ENCODE measurements at regions of chrX and their contacts with region 1.

Region 1: DNA sequence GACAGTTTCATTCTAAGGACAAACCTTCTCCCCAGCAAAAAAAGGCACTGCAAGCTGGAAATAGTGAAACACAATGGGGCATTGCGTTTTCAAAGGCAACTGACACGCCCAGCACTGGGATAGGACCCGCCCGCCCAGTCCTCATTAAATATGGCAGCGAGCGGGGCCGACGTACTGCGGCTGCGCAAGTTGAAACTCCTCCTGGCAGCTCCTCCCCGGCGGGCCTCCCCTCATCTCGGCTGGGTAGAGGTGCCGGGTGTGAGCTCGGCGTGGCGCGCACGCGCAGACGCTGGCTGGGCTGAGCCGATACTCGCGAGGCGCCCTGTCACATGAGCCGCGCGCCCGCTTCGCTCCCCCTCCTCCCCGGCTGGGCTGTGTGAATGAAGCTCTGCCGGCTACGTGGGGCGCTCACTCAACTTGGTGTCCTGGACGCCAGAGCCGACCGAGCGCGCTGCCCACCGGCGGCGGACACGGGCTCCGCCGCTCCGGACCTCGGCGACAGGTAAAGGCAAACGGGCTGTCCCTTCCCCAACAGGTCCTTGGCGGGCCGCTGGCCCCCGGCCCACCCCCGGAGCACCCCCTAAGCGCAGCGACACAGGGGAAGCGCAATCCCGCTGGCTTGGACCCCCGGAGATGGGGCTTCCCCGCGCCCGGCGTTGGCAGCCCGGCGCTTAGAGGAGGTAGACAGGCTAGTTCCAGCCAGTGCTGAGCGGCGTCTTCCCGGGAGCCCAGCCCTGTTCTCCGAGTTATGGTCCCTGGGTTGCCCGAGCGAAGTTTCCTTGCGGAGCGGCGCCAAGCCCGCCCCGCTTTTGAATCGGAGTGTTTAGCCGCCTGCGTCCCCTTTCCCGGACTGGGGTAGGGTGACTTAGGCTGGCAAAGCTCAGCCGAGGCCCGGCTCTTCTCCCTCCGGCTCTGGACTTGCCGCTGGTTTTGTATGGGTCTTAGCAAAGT is at the start of gene CLCN5:
- DNase-seq: peak; percentile 71
- ATAC-seq: peak; percentile 98
- H3K4me3 ChIP-seq: peak within 1 kb of the TSS; percentile 67
- H3K27ac ChIP-seq: peak within 1 kb of the TSS; percentile 14; the same call in 1 of the 2 replicates
- H3K4me1 ChIP-seq: no peaks in the 10 kb centered on the region
- H3K27me3 ChIP-seq: no peaks in the 10 kb centered on the region
- CTCF ChIP-seq: no peak
- EP300 ChIP-seq: no peak
- POLR2A ChIP-seq: peak; percentile 75
- RAD21 ChIP-seq: no peak
- polyA plus RNA-seq, gene CLCN5: 0.33 to 0.43 TPM

Region 2: GRCh38 chrX:49618574-49618973 is 304.0 kb before region 1 on chrX:
- CTCF ChIA-PET with region 1: no interaction called
- POLR2A ChIA-PET with region 1: no interaction called
- RAD21 ChIA-PET with region 1: no interaction called
- SMC1A ChIA-PET with region 1: no interaction called
- in situ Hi-C with region 1: no loop called
- intact Hi-C with region 1: no loop called
- DNase-seq: no peak
- ATAC-seq: no peak
- H3K4me3 ChIP-seq: no peak overlapping the region
- H3K27ac ChIP-seq: no peak overlapping the region
- H3K4me1 ChIP-seq: no peaks in the 10 kb centered on the region
- H3K27me3 ChIP-seq: no peaks in the 10 kb centered on the region
- CTCF ChIP-seq: no peak
- EP300 ChIP-seq: no peak
- POLR2A ChIP-seq: no peak
- RAD21 ChIP-seq: no peak

Region 3: DNA sequence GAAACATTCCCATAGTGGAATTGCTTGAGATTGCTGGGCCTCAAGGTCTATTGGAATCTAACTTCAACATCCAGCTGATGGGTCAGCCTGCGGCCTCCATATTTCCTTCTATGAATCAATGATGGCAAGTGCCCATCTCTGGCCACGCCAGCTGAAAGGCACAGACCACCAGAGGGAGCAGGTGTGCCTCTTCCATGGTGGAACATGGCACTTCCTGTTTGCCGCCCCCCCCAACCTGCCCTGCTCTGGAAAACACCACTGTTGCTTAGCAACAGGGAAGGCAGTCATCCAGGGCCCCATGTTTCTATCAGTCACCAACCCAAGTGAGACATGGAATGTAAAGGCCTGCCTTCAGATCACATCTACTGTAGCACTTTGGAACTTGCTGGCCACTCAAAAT is 81.9 kb before region 1 on chrX:
- CTCF ChIA-PET with region 1: interaction called, 14 read pairs
- POLR2A ChIA-PET with region 1: no interaction called
- RAD21 ChIA-PET with region 1: interaction called, 3 read pairs
- SMC1A ChIA-PET with region 1: interaction called, 3 read pairs
- in situ Hi-C with region 1: no loop called
- intact Hi-C with region 1: no loop called
- DNase-seq: peak; percentile 15
- ATAC-seq: peak; percentile 84
- H3K4me3 ChIP-seq: no peak overlapping the region
- H3K27ac ChIP-seq: no peak overlapping the region
- H3K4me1 ChIP-seq: no peaks in the 10 kb centered on the region
- H3K27me3 ChIP-seq: no peaks in the 10 kb centered on the region
- CTCF ChIP-seq: peak; percentile 41 to 66 (median 57); a peak in 4 of 6 replicates
- EP300 ChIP-seq: no peak
- POLR2A ChIP-seq: no peak
- RAD21 ChIP-seq: peak; percentile 45

Region 4: DNA sequence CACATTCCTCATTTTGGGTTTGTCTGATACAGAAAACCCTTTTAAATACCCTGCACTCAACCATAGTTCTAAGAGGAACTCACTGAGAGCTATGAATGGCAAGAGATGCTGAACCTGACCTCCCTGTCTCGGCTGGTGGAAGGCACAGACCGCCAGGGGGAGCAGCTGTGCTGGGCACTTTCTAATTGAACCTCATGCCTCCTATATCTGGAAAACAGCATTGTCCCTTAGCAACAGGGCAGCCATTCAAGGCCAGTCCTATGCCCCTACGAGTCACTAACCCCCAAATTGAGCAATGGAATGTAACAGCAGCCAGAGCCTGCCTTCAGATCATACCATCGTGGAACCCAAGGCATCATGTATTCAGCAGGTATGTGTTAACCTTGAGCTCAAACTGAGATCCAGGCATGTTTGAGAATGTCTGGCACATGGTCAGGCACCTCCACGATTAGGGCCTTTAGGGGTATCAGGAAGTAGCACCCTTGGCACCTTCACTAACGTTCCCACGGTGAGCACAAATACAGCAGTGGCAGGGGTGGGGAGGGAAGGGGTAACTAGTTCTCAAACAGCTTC is 38.2 kb before region 1 on chrX:
- CTCF ChIA-PET with region 1: interaction called, 72 read pairs
- POLR2A ChIA-PET with region 1: no interaction called
- RAD21 ChIA-PET with region 1: interaction called, 16 read pairs
- SMC1A ChIA-PET with region 1: interaction called, 22 read pairs
- in situ Hi-C with region 1: no loop called
- intact Hi-C with region 1: loop called (anchors 5 kb)
- DNase-seq: peak; percentile 7
- ATAC-seq: peak; percentile 80
- H3K4me3 ChIP-seq: no peak overlapping the region
- H3K27ac ChIP-seq: no peak overlapping the region
- H3K4me1 ChIP-seq: no peaks in the 10 kb centered on the region; the same call in 1 of the 2 replicates
- H3K27me3 ChIP-seq: no peaks in the 10 kb centered on the region
- CTCF ChIP-seq: peak; percentile 76 to 88 (median 83)
- EP300 ChIP-seq: no peak
- POLR2A ChIP-seq: no peak
- RAD21 ChIP-seq: peak; percentile 45; the same call in 1 of the 2 replicates

Region 5: DNA sequence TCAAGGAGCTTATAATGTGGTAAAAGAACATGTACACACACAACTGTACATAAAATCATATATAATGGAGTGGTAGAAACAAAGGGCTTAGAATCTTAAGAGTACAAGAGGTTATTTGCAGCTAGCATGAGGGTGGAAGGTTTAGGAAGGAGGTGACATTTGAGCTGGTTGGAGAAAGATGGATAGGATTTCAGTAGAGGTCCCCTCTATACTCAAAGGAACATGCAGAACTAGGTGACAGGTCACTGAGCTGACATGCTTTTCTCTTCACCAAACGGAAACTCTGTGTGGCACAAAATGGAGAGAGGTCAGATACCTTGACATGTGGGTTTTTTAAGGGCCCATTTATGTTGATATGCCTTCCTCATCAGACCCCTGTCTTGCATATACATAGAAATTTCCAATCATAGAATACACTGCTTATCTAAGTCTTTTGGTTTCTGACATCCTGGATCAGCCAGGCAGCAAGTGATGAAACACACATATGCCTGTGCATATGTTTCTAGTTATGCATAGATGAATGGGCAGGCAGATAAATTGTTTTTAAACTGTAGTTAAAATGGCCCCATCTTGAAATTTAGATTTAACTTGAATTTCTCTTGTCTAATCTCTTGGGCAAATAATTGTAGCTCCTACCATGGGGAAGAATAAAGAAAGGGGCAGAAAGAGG is 29.1 kb after region 1 on chrX:
- CTCF ChIA-PET with region 1: interaction called, 7 read pairs
- POLR2A ChIA-PET with region 1: no interaction called
- RAD21 ChIA-PET with region 1: interaction called, 3 read pairs
- SMC1A ChIA-PET with region 1: interaction called, 10 read pairs
- in situ Hi-C with region 1: no loop called
- intact Hi-C with region 1: no loop called
- DNase-seq: no peak
- ATAC-seq: no peak
- H3K4me3 ChIP-seq: no peak overlapping the region
- H3K27ac ChIP-seq: no peak overlapping the region
- H3K4me1 ChIP-seq: no peaks in the 10 kb centered on the region; the same call in 1 of the 2 replicates
- H3K27me3 ChIP-seq: no peaks in the 10 kb centered on the region
- CTCF ChIP-seq: no peak
- EP300 ChIP-seq: no peak
- POLR2A ChIP-seq: no peak
- RAD21 ChIP-seq: no peak

Region 6: DNA sequence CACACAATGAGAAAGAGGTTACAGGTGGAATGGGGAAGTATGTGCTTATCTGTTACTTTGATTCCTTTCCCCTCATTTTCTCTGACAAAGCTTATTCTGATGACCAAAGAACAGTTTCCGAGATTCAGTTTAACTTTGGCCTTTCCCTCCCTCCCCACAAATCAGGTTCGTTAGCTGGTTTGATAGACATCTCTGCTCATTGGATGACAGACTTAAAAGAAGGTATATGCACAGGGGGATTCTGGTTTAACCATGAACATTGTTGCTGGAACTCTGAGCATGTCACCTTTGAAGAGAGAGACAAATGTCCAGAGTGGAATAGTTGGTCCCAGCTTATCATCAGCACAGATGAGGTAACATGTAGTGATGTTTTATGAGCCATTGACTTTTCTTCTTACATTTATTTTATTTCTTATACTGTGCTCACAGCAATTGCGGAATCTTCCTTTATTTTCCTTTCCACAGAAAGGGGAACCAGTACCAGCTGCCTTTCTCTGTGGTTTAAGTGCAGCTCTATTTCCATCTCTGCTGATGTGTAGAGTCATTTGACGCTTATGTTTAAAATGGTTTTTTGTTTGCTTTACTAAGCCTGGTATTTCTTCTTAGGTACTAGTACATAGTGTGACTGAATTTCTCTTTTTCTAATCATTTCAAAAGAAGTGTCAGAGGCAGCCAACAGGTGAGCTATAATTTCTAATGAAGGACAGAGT is 153.2 kb after region 1 on chrX:
- CTCF ChIA-PET with region 1: interaction called, 11 read pairs
- POLR2A ChIA-PET with region 1: no interaction called
- RAD21 ChIA-PET with region 1: interaction called, 9 read pairs
- SMC1A ChIA-PET with region 1: interaction called, 4 read pairs
- in situ Hi-C with region 1: no loop called
- intact Hi-C with region 1: loop called (anchors 5 kb)
- DNase-seq: no peak
- ATAC-seq: peak; percentile 46
- H3K4me3 ChIP-seq: no peak overlapping the region
- H3K27ac ChIP-seq: no peak overlapping the region
- H3K4me1 ChIP-seq: no peaks in the 10 kb centered on the region
- H3K27me3 ChIP-seq: no peaks in the 10 kb centered on the region
- CTCF ChIP-seq: no peak
- EP300 ChIP-seq: no peak
- POLR2A ChIP-seq: no peak
- RAD21 ChIP-seq: no peak